PC-9 (cell line): ENCODE measurements at regions of chr10 and their contacts with region 1.

Region 1: GRCh38 chr10:86657011-86657395 is 2.7 kb downstream of the OPN4 start:
- DNase-seq: no peak
- H3K4me3 ChIP-seq: no peak overlapping the region
- H3K27ac ChIP-seq: no peak overlapping the region
- H3K4me1 ChIP-seq: peaks cover 10% of the 10 kb centered on the region
- H3K27me3 ChIP-seq: no peaks in the 10 kb centered on the region
- CTCF ChIP-seq: no peak

Region 2: DNA sequence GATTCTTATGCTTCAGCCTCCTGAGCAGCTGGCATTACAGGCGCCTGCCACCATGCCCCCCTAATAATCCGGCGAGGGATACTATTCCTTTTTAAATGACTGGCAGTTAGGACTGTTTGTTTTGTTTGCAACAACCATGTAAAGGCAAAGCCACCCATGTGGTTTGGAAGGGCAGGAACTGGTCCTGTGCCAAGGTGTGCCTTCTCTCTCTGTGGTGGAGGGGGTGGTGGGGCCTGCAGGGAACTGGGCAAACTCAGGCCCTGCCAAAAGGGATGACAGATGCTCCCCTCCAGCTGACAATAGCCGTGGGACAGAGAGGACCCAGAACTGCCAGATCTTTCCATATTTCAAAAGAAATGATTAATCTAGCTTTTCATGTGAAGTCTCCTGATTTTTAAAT is 111.9 kb before region 1 on chr10:
- CTCF ChIA-PET with region 1: interaction called, 18 read pairs
- POLR2A ChIA-PET with region 1: no interaction called
- intact Hi-C with region 1: no loop called
- DNase-seq: no peak
- H3K4me3 ChIP-seq: no peak overlapping the region
- H3K27ac ChIP-seq: no peak overlapping the region
- H3K4me1 ChIP-seq: no peaks in the 10 kb centered on the region
- H3K27me3 ChIP-seq: no peaks in the 10 kb centered on the region
- CTCF ChIP-seq: no peak

Region 3: DNA sequence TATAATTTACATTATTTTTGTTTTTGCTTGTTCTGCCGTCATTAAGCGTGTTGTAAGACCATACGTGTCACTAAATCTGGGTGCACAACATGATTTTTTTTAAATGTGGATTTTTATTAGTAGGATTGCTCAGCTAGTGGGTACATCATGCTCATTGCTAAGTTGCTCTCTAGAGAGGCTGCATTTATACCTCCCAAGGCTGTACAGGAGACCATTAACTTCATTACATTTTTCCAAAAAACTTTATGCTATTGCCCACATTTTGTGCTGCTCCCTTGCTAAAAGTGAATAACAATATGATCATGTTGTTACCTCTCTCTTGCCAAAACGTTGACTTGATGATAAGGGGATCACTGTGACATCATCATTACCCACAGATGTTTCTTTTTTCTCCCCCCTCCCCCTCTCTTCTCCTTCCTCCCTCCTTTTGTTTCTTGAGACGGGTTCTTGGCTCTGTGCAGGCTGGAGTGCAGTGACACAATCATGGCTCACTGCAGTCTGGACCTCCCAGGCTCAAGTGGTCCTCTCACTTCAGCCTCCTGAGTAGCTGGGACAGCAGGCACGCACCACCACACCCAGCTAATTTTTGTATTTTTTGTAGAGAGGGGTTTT is 164.5 kb after region 1 on chr10:
- CTCF ChIA-PET with region 1: no interaction called
- POLR2A ChIA-PET with region 1: no interaction called
- intact Hi-C with region 1: no loop called
- DNase-seq: no peak
- H3K4me3 ChIP-seq: no peak overlapping the region
- H3K27ac ChIP-seq: no peak overlapping the region
- H3K4me1 ChIP-seq: no peaks in the 10 kb centered on the region
- H3K27me3 ChIP-seq: no peaks in the 10 kb centered on the region
- CTCF ChIP-seq: no peak